Activated CD4-positive, alpha-beta memory T cell treated with anti-CD3 and anti-CD28 coated beads, Interleukin-2, amount 10 ng/mL, durations not matched to agents 7 days and 5 days (primary cell): ENCODE measurements at regions of chr12 and their contacts with region 1.

Region 1: DNA sequence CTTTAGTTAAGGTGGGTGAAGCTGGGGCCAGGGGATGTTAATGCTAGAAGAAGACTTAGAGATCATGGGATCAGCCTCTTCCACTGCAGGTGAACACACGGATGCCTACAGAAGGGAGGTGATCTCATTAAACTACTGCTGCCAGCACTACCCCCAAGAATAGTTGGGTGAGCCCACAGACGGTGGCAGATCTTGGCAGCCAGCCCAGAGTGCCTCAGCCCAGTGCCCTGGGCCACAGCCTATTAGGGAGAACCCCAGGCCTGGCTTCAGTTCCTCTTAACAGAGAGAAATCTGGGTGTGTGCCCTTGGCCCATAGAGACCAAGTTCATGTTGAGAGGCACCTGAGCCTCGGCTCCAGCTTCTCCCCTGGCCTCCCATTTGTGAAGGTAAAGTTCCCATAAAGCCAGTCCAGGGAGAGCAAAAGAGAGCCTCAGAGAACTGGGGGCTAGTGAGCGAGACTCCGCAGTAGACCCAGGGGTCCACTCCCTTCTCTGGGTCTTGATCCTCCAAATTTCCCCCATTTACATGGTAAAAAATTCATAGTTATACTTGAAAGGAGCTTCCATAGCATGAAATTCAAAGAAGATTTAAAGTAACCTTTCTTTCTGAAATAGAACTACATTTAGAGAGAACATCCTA is 125.0 kb upstream of the CCND2 start:
- DNase-seq: peak; percentile 50
- H3K4me3 Mint-ChIP-seq: no peak overlapping the region
- H3K27ac Mint-ChIP-seq: peak overlapping the region; percentile 84
- H3K4me1 Mint-ChIP-seq: peaks cover 93% of the 10 kb centered on the region
- H3K27me3 Mint-ChIP-seq: no peaks in the 10 kb centered on the region

Region 2: DNA sequence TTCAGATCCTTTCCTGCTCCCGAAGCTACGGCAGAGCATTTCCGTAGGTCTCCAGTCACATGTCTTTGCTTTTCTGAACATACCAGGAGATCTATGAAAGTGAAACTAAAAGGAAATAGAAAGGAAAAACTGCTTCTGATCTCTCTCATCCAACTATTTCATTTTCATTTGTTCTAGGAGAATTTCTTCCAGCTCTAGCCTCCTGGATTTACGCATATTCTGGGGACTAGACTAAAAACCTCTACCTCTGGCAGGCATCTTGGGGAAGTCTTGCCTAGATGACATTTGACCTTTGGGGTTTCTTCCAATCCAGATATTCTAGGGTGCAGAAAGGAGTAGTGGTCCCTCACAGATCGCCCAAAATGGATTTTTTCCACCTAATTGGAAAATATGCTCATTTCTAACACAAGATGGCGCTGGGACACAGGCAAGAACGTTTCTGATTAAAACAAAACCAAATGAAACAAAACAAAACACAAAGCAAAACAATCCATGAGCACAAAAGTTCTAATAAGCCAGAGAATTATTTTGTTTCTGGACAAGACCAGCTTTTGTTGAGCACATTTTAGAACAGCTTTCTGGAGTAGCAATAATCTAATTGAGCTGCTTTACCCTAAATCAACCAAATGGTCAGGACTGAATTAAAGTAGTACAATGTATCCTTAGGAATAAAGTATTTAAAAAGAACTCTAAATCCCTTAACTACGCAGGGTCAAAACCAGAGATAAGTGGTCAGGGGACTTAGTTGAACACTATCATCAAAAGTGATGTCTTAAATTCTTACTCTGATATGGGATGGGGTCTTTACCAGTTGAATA is 263.1 kb before region 1 on chr12:
- CTCF ChIA-PET with region 1: no interaction called
- POLR2A ChIA-PET with region 1: no interaction called
- DNase-seq: peak; percentile 45
- H3K4me3 Mint-ChIP-seq: no peak overlapping the region
- H3K27ac Mint-ChIP-seq: no peak overlapping the region
- H3K4me1 Mint-ChIP-seq: peaks cover 10% of the 10 kb centered on the region
- H3K27me3 Mint-ChIP-seq: peaks cover 9% of the 10 kb centered on the region

Region 3: GRCh38 chr12:4118017-4118510 is 30.5 kb before region 1 on chr12:
- CTCF ChIA-PET with region 1: interaction called, 78 read pairs
- POLR2A ChIA-PET with region 1: interaction called, 93 read pairs
- DNase-seq: no peak
- H3K4me3 Mint-ChIP-seq: peak overlapping the region; percentile 63
- H3K27ac Mint-ChIP-seq: peak overlapping the region; percentile 90
- H3K4me1 Mint-ChIP-seq: peaks cover 72% of the 10 kb centered on the region
- H3K27me3 Mint-ChIP-seq: peaks cover 8% of the 10 kb centered on the region

Region 4: GRCh38 chr12:4169959-4170358 is 21.4 kb after region 1 on chr12:
- CTCF ChIA-PET with region 1: interaction called, 13 read pairs
- POLR2A ChIA-PET with region 1: interaction called, 80 read pairs
- DNase-seq: no peak
- H3K4me3 Mint-ChIP-seq: no peak overlapping the region
- H3K27ac Mint-ChIP-seq: no peak overlapping the region
- H3K4me1 Mint-ChIP-seq: peaks cover 41% of the 10 kb centered on the region
- H3K27me3 Mint-ChIP-seq: no peaks in the 10 kb centered on the region

Region 5: GRCh38 chr12:4178424-4179170 is 30.1 kb after region 1 on chr12:
- CTCF ChIA-PET with region 1: interaction called, 10 read pairs
- POLR2A ChIA-PET with region 1: interaction called, 6 read pairs
- DNase-seq: no peak
- H3K4me3 Mint-ChIP-seq: peak overlapping the region; percentile 0
- H3K27ac Mint-ChIP-seq: peak overlapping the region; percentile 54
- H3K4me1 Mint-ChIP-seq: peaks cover 26% of the 10 kb centered on the region
- H3K27me3 Mint-ChIP-seq: peaks cover 5% of the 10 kb centered on the region